Ovary (tissue), 10 donors: ENCODE measurements at regions of chr12 and their contacts with region 1.

Region 1: DNA sequence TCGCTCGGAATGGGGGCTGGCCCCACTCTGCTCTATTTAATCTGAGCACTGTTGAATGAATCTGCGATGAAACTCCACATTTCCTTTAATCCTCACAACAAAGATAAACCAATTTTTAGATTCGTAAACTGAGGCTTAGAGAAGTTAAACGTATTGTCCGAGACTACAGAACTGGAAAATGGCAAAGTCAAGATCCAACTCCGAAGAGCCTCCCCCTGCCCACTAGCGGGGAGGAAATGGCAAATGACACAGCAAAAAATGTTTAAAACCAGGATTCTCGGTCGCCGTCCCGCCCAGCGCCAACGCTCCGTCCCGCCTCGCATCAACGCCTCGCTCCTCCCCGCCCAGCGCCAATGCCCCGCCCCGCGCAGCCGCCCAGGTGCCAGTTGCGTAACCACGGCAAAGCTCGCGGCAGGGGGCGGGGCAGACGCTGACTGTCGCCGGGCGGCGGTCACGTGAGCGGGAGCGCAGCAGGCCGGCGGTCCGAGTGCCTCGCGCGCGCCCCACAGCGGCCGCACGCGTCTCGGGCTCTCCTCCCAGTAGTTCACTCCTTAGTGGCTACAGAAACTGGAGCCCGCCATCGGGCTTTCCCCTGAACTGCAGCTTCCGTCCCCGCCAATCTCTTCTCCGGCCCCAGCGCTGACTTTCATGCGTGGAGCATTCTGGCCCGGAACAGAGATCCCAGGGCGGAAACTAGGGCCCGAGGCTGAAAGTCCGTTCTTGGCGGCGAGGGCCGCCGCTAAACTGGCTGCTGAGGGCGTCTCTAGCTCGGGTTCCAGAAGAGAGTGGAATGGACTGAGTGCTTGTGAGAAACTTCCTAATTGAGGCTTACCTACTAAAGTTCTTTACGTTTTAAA is 13.6 kb upstream of the LRRC23 start:
- DNase-seq: peak; percentile 98 to 99 (median 99)
- H3K4me3 ChIP-seq: peak overlapping the region; percentile 47
- H3K27ac ChIP-seq: peak overlapping the region; percentile 40 to 60
- H3K4me1 ChIP-seq: peaks cover 2% of the 10 kb centered on the region
- H3K27me3 ChIP-seq: no peaks in the 10 kb centered on the region
- CTCF ChIP-seq: peak; percentile 94 to 98 (median 97)
- EP300 ChIP-seq: peak; percentile 66
- POLR2A ChIP-seq: peak; percentile 73

Region 2: GRCh38 chr12:6316922-6317692 is 573.9 kb before region 1 on chr12:
- intact Hi-C with region 1: loop called in 1 of 4 experiments (anchors 5 kb)
- DNase-seq: no peak
- H3K4me3 ChIP-seq: no peak overlapping the region
- H3K27ac ChIP-seq: no peak overlapping the region
- H3K4me1 ChIP-seq: no peaks in the 10 kb centered on the region
- H3K27me3 ChIP-seq: no peaks in the 10 kb centered on the region
- CTCF ChIP-seq: no peak
- EP300 ChIP-seq: no peak
- POLR2A ChIP-seq: no peak

Region 3: GRCh38 chr12:6873094-6874014 is 17.7 kb before region 1 on chr12 and contains the start of gene SPSB2:
- intact Hi-C with region 1: loop called in 1 of 4 experiments (anchors 2 kb)
- DNase-seq: peak; percentile 99 to 100 (median 99)
- H3K4me3 ChIP-seq: peak within 1 kb of the TSS; percentile 64
- H3K27ac ChIP-seq: peak within 1 kb of the TSS; percentile 42 to 77
- H3K4me1 ChIP-seq: no peaks in the 10 kb centered on the region
- H3K27me3 ChIP-seq: no peaks in the 10 kb centered on the region
- CTCF ChIP-seq: peak in 1 of 3 donors; percentile 28
- EP300 ChIP-seq: no peak
- POLR2A ChIP-seq: peak; percentile 66
- total RNA-seq, gene SPSB2: 5.8 to 14.7 (median 8.5) TPM

Region 4: DNA sequence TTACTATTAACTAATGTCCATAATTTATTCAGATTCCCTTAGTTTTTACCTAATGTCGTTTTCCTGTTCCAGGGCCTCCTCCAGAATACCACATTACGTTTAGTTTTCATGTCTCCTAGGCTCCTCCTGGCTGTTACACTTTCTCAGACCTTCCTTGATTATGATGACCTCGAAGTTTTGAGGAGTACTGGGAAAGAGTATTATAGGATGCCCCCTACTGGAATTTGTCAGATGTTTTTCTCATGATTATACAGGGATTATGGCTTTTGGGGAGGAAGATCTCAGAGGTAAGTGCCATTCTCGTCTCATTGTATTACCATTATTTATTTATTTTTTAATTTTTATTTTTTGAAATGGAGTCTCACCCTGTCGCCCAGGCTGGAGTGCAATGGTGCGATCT is 151.8 kb after region 1 on chr12:
- intact Hi-C with region 1: no loop called
- DNase-seq: no peak
- H3K4me3 ChIP-seq: no peak overlapping the region
- H3K27ac ChIP-seq: no peak overlapping the region
- H3K4me1 ChIP-seq: no peaks in the 10 kb centered on the region
- H3K27me3 ChIP-seq: no peaks in the 10 kb centered on the region
- CTCF ChIP-seq: no peak
- EP300 ChIP-seq: no peak
- POLR2A ChIP-seq: no peak